Activated naive CD4-positive, alpha-beta T cell treated with anti-CD3 and anti-CD28 coated beads for 36 hours (primary cell): ENCODE measurements at regions of chr17 and their contacts with region 1.

Region 1: GRCh38 chr17:66255112-66255511 is 25.9 kb upstream of the APOH start:
- DNase-seq: peak; percentile 56
- H3K4me3 Mint-ChIP-seq: peak overlapping the region; percentile 46
- H3K27ac Mint-ChIP-seq: peak overlapping the region; percentile 67
- H3K4me1 Mint-ChIP-seq: peaks cover 22% of the 10 kb centered on the region
- H3K27me3 Mint-ChIP-seq: no peaks in the 10 kb centered on the region

Region 2: GRCh38 chr17:66123163-66123562 is 131.9 kb before region 1 on chr17:
- CTCF ChIA-PET with region 1: no interaction called
- intact Hi-C with region 1: no loop called
- DNase-seq: no peak
- H3K4me3 Mint-ChIP-seq: no peak overlapping the region
- H3K27ac Mint-ChIP-seq: no peak overlapping the region
- H3K4me1 Mint-ChIP-seq: no peaks in the 10 kb centered on the region
- H3K27me3 Mint-ChIP-seq: peaks cover 5% of the 10 kb centered on the region

Region 3: GRCh38 chr17:66200685-66201092 is 54.4 kb before region 1 on chr17:
- CTCF ChIA-PET with region 1: interaction called, 6 read pairs
- intact Hi-C with region 1: loop called (anchors 1 kb)
- DNase-seq: peak; percentile 76
- H3K4me3 Mint-ChIP-seq: no peak overlapping the region
- H3K27ac Mint-ChIP-seq: no peak overlapping the region
- H3K4me1 Mint-ChIP-seq: peaks cover 16% of the 10 kb centered on the region
- H3K27me3 Mint-ChIP-seq: no peaks in the 10 kb centered on the region

Region 4: GRCh38 chr17:66348584-66349165 is 93.6 kb after region 1 on chr17:
- CTCF ChIA-PET with region 1: no interaction called
- intact Hi-C with region 1: no loop called
- DNase-seq: peak; percentile 62
- H3K4me3 Mint-ChIP-seq: no peak overlapping the region
- H3K27ac Mint-ChIP-seq: peak overlapping the region; percentile 47
- H3K4me1 Mint-ChIP-seq: peaks cover 73% of the 10 kb centered on the region
- H3K27me3 Mint-ChIP-seq: no peaks in the 10 kb centered on the region

Region 5: DNA sequence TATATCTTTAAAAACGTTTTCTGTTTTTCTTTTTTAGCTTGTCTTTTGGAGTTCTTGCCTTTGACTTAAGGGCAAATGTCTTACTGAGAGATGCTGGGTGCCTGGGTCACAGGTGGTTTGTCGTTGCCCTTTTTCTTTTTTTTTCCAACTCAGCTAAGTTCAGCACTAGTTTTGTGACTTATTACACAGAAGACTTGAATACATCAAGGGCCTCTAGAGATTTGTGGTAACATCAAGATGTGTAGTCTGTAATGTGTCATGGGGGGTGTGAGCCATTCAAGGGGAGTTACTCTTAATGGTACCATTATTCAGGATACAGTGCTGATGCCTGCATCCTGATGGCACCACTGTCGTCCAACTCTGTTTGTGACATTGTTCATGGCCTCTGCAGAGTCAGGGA is 142.4 kb after region 1 on chr17:
- CTCF ChIA-PET with region 1: interaction called, 4 read pairs
- intact Hi-C with region 1: loop called (anchors 1 kb)
- DNase-seq: peak; percentile 59
- H3K4me3 Mint-ChIP-seq: no peak overlapping the region
- H3K27ac Mint-ChIP-seq: peak overlapping the region; percentile 55
- H3K4me1 Mint-ChIP-seq: peaks cover 81% of the 10 kb centered on the region
- H3K27me3 Mint-ChIP-seq: no peaks in the 10 kb centered on the region

Region 6: DNA sequence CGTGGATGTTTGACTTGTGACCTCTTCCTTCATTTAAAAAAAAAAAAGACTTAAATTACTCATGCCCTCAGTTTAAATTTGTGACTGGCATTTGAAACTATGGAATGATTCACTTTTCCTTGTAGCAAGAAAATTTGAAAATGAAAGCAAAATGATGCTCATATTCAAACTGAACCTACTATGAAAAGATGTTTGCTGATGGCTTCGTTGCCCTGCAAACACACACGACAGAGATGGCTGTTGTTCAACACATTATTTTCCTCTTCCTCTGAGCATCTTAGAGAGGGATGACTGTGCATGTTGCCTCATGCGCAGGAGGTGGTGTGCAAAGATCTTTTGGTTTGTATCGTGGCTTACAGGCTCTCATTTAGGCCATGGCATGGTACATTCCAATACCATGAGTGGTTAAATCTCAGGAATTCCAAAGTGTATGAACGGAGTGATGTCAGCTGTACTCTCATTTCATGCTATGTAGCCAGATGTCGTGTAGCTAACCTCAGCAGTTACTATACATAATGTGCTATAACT is 211.8 kb after region 1 on chr17:
- CTCF ChIA-PET with region 1: no interaction called
- intact Hi-C with region 1: loop called (anchors 1 kb)
- DNase-seq: peak; percentile 87
- H3K4me3 Mint-ChIP-seq: peak overlapping the region; percentile 45
- H3K27ac Mint-ChIP-seq: peak overlapping the region; percentile 90
- H3K4me1 Mint-ChIP-seq: peaks cover 75% of the 10 kb centered on the region
- H3K27me3 Mint-ChIP-seq: no peaks in the 10 kb centered on the region

Region 7: DNA sequence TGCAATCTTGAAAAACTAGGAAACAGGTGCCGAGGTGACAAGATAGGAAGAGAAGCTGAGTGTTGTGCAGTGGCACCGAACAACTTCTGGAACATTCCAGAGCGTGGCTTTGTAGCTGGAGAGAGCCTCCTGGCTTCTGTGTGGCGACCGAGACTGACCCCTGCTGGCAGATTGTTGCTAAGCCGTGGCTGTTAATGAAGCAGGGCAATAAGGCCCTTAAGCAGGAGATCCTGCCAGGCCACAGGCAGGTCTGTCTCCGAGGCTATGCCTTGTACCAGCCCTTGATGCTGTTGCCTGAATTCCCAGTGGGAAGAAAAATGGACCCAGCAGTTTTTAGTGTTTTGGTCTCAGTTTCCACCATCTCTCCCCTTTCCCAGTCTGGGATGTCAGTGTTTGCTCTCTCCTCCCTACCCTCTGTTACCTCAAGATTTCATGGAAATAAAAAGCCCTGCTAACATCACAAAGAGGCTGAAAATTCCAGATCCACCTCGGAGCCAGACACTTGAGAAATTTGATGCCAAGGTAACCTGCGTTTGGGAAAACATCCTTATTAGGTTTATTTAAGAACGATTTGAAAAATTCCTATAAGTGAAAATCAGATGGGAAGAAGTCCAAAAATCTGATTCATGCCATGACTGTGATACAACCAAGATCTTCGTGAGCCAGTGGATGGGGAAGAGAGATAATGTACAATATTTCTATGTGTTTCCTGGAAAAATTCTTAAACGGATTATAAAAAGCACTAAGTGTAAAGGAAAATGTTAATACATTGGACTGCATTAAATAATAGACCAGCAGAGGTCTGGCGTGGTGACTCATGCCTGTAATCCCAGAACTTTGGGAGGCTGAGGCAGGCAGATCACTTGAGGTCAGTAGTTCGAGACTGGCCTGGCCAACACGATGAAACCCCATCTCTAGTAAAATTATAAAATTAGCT is 312.4 kb after region 1 on chr17:
- CTCF ChIA-PET with region 1: interaction called, 11 read pairs
- intact Hi-C with region 1: loop called (anchors 1 kb)
- DNase-seq: peak; percentile 89
- H3K4me3 Mint-ChIP-seq: no peak overlapping the region
- H3K27ac Mint-ChIP-seq: no peak overlapping the region
- H3K4me1 Mint-ChIP-seq: peaks cover 48% of the 10 kb centered on the region
- H3K27me3 Mint-ChIP-seq: no peaks in the 10 kb centered on the region

Region 8: GRCh38 chr17:66633317-66633965 is 378.3 kb after region 1 on chr17:
- CTCF ChIA-PET with region 1: no interaction called
- intact Hi-C with region 1: loop called (anchors 1 kb)
- DNase-seq: peak; percentile 78
- H3K4me3 Mint-ChIP-seq: no peak overlapping the region
- H3K27ac Mint-ChIP-seq: peak overlapping the region; percentile 44
- H3K4me1 Mint-ChIP-seq: peaks cover 62% of the 10 kb centered on the region
- H3K27me3 Mint-ChIP-seq: no peaks in the 10 kb centered on the region

Region 9: DNA sequence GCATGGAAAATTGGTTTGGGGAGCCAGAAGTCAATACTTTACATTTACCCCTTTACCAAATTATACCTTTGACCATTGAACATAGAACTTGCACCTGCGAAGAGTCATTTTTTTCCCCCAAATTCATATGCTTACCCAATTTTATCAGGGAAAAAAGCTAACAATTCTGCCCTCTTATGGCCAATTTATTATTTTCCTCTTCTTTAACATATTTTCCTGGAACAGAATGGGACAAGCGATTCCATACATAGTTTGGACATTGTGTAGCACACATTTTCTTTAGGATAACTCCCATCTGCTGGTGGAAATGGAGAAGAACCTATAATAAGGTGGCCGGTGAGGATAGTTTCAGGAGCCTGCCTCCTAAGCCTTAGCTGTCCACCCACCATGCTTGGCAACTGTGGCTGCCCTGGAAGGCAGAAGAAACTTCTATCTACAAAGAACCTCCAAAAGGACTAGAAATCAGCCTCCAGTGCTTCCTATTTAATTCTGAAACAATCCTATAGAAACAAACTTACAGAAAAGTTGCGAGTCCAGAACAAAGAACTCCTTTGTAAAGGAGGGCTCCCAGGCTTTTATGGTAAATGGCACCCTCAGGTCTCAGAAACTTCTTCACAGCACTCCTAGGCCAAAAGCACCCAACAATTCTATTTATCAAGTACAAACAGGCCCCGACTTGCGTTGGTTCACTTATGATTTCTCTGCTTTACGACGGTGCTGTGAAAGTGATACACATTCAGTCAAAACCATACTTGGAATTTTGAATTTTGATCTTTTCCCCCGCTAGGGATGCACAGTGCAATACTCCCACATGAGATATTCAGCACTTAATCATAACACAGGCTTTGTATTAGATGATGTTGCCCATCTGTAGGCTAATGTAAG is 645.3 kb after region 1 on chr17:
- CTCF ChIA-PET with region 1: no interaction called
- intact Hi-C with region 1: loop called (anchors 1 kb)
- DNase-seq: no peak
- H3K4me3 Mint-ChIP-seq: no peak overlapping the region
- H3K27ac Mint-ChIP-seq: no peak overlapping the region
- H3K4me1 Mint-ChIP-seq: no peaks in the 10 kb centered on the region
- H3K27me3 Mint-ChIP-seq: no peaks in the 10 kb centered on the region